ENCODE measurements at regions of chr9 and their contacts with region 1.

Region 1: GRCh38 chr9:128607642-128608350 is 48.9 kb downstream of the DYNC2I2 start:
- DNase-seq: peak; percentile 80
- ATAC-seq: peak; percentile 96

Region 2: GRCh38 chr9:128568470-128569078 is 39.2 kb before region 1 on chr9:
- intact Hi-C with region 1: loop called (anchors 5 kb)
- DNase-seq: no peak
- ATAC-seq: no peak

Region 3: DNA sequence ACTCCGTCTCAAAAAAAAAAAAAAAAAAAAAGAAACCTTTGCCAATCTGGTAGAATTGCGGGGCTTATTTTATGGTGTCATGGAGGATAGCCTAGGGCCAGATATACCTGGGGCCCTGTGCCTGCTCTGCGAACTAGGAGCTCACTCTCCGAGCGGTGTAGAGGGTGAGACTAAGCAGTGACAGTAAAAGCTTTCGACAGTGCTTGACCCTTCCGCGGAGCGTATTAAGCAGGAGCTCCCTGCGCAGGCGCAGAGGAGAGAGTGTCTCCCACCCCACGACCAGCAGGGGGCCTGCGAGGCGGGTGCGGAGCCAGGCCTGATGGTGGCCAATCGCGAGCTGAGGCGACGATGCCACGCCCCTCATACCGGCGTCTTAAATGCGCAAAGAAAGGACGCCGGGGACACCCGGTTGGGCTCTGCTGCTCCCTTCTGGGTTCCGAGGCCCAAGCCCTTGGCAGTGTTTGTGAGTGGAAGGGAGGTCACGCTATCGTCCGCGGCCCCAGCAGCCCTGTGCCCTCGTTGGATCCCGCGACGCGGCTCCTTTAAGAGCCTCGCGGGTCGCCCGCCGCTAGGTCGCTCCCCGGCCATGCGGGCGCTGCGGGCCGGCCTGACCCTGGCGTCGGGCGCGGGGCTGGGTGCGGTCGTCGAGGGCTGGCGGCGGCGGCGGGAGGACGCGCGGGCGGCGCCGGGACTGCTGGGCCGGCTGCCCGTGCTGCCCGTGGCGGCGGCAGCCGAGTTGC is 210.5 kb after region 1 on chr9 and contains the start of gene ENDOG:
- intact Hi-C with region 1: no loop called
- DNase-seq: peak; percentile 99
- ATAC-seq: peak; percentile 93
- total RNA-seq, gene ENDOG: 84.4 TPM

Region 4: DNA sequence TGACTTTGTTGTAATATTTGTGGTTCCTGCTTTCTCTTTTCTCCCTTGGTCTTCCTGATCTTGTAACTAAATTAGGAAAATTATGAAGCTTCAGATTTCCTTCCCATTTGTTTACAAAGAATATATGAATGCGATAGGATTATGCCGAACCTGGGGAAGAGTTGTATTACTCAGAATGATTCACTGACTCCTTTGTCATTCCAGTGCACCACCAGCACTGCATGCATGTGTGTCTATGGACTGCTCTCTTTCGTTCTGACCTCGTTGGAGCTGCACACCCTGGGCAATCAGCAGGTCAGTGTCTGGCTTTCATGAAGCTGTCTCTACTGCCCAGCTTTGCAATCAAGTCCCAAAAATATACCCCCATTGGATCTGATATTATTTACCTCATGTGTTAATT is 365.2 kb after region 1 on chr9:
- intact Hi-C with region 1: loop called (anchors 10 kb)
- DNase-seq: no peak
- ATAC-seq: no peak

Measured in Right ventricle myocardium inferior (tissue), 1 donor.